ENCODE measurements at regions of chr7 and their contacts with region 1.

Region 1: DNA sequence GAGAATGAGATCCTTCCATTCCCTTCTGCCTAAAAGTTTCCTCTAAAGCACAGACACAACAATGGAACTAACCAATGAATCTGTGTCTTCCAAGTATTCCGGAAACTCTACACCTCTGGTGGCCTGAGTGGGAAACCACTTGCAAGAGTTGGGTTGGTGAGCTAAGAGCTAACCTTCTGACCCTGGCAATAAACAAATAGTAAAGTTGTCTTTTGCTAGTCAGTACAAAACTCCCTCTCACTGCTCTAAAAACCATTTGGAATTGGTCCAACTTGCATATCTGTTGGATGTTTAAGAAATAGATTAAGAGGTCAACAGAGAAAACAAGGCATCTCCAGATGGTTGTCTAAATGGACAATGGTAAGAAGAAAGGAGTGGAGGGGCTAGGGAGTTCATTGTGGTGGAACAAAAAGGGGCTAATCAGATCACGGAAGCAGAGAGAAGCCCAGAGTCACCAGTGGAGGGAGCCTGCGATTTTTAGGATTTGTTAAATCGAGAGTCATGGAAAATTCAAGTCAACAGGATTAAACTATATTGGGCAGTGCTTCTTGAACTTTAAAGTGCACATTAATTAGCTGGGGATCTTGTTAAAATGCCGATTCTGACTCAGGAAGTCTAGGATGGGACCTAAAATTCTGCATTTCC is 192.3 kb downstream of the EVX1 start:
- DNase-seq: no peak
- ATAC-seq: no peak
- H3K4me3 ChIP-seq: no peak overlapping the region
- H3K4me3 Mint-ChIP-seq: no peak overlapping the region
- H3K27ac ChIP-seq: no peak overlapping the region
- H3K27ac Mint-ChIP-seq: no peak overlapping the region
- H3K4me1 ChIP-seq: no peaks in the 10 kb centered on the region
- H3K4me1 Mint-ChIP-seq: no peaks in the 10 kb centered on the region
- H3K27me3 ChIP-seq: peaks cover 5 to 8% of the 10 kb centered on the region in 2 experiments
- H3K27me3 Mint-ChIP-seq: peaks cover 36% of the 10 kb centered on the region
- CTCF ChIP-seq: no peak

Region 2: GRCh38 chr7:27375958-27376357 is 58.9 kb before region 1 on chr7:
- CTCF ChIA-PET with region 1: no interaction called
- POLR2A ChIA-PET with region 1: no interaction called
- intact Hi-C with region 1: loop called in 1 of 2 experiments (anchors 10 kb)
- DNase-seq: no peak
- ATAC-seq: no peak
- H3K4me3 ChIP-seq: no peak overlapping the region
- H3K4me3 Mint-ChIP-seq: no peak overlapping the region
- H3K27ac ChIP-seq: no peak overlapping the region
- H3K27ac Mint-ChIP-seq: no peak overlapping the region
- H3K4me1 ChIP-seq: no peaks in the 10 kb centered on the region
- H3K4me1 Mint-ChIP-seq: no peaks in the 10 kb centered on the region
- H3K27me3 ChIP-seq: peaks cover 5 to 12% of the 10 kb centered on the region in 2 experiments
- H3K27me3 Mint-ChIP-seq: peaks cover 59% of the 10 kb centered on the region
- CTCF ChIP-seq: no peak

Region 3: GRCh38 chr7:27423272-27423671 is 11.6 kb before region 1 on chr7:
- CTCF ChIA-PET with region 1: no interaction called
- POLR2A ChIA-PET with region 1: no interaction called
- intact Hi-C with region 1: no loop called
- DNase-seq: no peak
- ATAC-seq: no peak
- H3K4me3 ChIP-seq: no peak overlapping the region
- H3K4me3 Mint-ChIP-seq: no peak overlapping the region
- H3K27ac ChIP-seq: no peak overlapping the region
- H3K27ac Mint-ChIP-seq: no peak overlapping the region
- H3K4me1 ChIP-seq: no peaks in the 10 kb centered on the region
- H3K4me1 Mint-ChIP-seq: no peaks in the 10 kb centered on the region
- H3K27me3 ChIP-seq: no peaks in the 10 kb centered on the region
- H3K27me3 Mint-ChIP-seq: peaks cover 14% of the 10 kb centered on the region
- CTCF ChIP-seq: no peak

Measured in CD4-positive, alpha-beta T cell (primary cell).